ENCODE measurements at regions of chr11 and their contacts with region 1.

Region 1: DNA sequence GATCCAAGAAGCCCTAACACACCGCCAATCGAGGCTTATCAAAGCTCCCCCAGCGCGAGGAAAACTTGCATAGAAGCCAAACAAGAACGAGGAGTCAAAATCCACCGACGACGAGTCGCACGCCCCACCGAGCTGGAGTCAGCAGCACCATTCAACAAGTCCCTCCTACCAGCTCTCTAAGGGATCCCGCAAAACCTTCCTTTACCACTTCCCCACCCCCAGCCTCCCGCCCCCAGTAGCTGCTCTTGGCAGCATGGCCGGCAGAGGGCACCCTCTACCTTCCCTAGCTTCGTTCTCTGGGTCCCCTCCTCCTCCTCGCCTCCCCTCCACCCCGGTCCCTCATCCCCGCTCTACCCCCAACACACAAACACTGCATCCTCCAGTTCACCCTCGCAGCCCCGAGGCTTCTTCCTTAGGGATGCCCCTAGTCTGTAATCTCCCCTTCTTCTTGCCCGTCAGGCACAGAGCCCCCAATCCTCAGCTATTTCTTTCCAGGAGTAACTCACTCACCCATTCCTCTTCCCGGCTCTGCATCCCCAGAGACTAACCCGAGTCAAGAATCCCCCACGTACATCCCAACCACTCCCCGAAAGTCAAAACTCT is 1.3 kb downstream of the BDNF start:
- DNase-seq: peak; percentile 86
- ATAC-seq: peak; percentile 90

Region 2: DNA sequence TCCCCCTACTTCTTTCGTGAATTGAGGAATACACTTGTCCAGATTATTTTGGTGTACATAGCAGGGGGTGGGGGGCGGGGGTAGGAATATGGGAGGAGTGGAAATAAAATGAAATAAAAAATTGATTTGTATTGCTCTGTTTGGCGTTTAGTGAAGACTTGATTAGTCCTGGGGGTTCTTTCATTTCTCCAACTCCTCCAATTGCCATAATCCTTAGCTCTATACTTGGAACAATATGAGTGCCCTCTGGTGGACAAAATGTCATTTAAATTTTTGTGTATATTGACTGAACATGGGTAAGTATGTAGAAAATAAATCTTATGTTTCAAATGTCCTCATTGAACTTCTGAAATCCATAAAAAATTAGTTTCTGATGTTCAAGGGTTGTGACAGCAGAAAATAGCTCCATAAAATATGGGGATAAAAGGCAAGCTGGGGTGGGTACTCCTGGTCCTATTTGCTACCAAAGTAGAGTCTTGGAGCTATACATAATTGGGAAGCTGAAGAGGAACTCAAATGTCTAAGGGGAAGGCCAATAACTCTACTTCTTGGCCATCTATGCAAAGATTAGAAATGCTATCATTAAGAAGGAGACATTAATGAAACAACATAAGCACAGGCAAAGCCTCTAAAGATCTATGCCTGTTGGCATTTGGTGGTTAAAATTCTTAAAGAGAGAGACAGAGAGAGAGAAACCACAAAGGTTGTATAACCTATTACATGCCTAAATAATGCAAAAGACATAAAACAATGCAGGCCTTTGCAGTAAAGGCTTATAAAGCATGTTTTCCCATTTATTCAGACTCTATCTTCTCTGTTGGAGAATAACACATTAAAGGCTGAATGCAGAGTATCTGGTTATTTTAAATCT is 830.8 kb after region 1 on chr11:
- intact Hi-C with region 1: loop called (anchors 5 kb)
- DNase-seq: no peak
- ATAC-seq: no peak

Region 3: GRCh38 chr11:29333993-29334775 is 1635.2 kb after region 1 on chr11:
- intact Hi-C with region 1: loop called (anchors 10 kb)
- DNase-seq: no peak
- ATAC-seq: no peak

Measured in left ventricle myocardium superior (tissue), 1 donor.